Heart right ventricle (tissue), 16 donors: ENCODE measurements at regions of chr12 and their contacts with region 1.

Region 1: GRCh38 chr12:69900720-69901131 is 75.7 kb downstream of the MYRFL start:
- DNase-seq: peak in 1 of 2 donors; percentile 85
- ATAC-seq: peak in 7 of 8 donors; percentile 35 to 79 (median 59)
- H3K4me3 ChIP-seq: no peak overlapping the region
- H3K27ac ChIP-seq: peak overlapping the region in 1 of 10 donors; percentile 9
- H3K4me1 ChIP-seq: peaks cover 0 to 23% (median 13%) of the 10 kb centered on the region in 9 donors
- H3K27me3 ChIP-seq: no peaks in the 10 kb centered on the region
- CTCF ChIP-seq: peak; percentile 79 to 92 (median 86)

Region 2: DNA sequence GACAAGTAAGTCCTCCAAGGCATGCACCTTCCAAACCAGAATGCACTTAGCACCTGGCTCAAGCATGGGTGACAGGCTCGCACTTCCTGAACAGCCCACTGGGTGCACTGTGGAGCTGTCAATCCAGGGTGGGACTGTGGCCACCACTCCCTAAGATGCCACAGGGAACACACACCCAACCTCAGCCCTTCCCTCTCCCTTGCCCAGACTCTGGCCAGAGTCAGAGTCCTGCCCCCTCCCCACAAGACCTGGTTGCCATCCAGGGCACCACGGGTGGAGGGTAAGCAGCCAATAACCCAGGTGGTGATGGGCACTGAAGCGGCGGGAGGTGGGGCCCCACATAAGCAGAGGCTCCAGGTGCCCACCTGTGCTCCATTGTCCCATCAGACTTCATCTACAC is 84.9 kb after region 1 on chr12:
- intact Hi-C with region 1: loop called in 2 of 10 experiments (anchors 5 to 10 kb)
- DNase-seq: no peak
- ATAC-seq: no peak
- H3K4me3 ChIP-seq: no peak overlapping the region
- H3K27ac ChIP-seq: no peak overlapping the region
- H3K4me1 ChIP-seq: peaks cover 0 to 26% (median 18%) of the 10 kb centered on the region in 9 donors
- H3K27me3 ChIP-seq: no peaks in the 10 kb centered on the region
- CTCF ChIP-seq: no peak

Region 3: GRCh38 chr12:69991341-69992288 is 90.9 kb after region 1 on chr12:
- intact Hi-C with region 1: loop called in 2 of 10 experiments (anchors 5 to 10 kb)
- DNase-seq: no peak
- ATAC-seq: no peak
- H3K4me3 ChIP-seq: no peak overlapping the region
- H3K27ac ChIP-seq: no peak overlapping the region
- H3K4me1 ChIP-seq: peaks cover 0 to 26% (median 18%) of the 10 kb centered on the region in 9 donors
- H3K27me3 ChIP-seq: no peaks in the 10 kb centered on the region
- CTCF ChIP-seq: no peak

Region 4: DNA sequence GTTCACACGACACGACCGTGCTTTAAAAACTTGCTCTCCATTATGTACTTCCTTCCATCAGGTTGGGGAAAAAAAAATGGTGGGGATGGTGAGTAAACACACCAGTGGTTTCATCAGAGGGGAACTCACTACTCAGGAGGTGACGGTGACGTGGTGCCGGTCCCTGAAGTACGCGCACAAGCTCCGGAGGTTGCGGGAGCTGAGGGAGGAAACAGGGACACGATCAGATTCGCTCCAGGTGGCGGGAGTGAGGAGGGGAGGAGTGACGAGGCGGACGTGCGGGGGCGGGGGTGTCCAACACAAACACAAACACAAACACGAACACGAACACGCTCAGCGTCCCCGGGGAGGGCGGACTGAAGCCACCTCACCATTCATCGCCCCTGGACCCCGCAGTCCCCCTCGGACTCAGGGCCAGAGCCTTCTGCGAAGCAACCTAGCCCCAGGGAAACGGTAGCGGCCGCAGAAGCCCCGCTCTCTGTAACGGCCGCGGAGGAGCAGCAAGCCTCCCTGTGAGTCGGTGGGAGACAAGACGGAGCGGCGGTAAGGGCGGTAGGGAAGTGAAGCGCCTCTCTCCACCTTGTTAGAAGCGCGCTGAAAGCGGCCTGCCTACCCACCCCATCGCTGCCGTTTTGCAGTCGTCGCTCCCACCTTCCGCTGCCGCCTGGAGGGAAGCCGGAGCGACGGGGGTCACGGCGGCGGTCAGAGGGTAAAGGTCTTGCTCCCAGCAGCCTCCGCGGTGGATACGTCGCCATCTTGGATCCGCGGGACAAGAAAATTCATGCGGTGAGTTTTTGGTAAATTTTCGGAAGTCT is 342.2 kb after region 1 on chr12 and contains the start of gene CNOT2:
- intact Hi-C with region 1: loop called in 3 of 10 experiments (anchors 10 kb)
- DNase-seq: peak; percentile 90 to 92
- ATAC-seq: peak; percentile 96 to 99 (median 97)
- H3K4me3 ChIP-seq: peak within 1 kb of the TSS; percentile 65 to 96 (median 88)
- H3K27ac ChIP-seq: peak within 1 kb of the TSS; percentile 89 to 99 (median 96)
- H3K4me1 ChIP-seq: peaks cover 7 to 61% (median 43%) of the 10 kb centered on the region in 9 donors
- H3K27me3 ChIP-seq: no peaks in the 10 kb centered on the region
- CTCF ChIP-seq: peak in 1 of 9 donors; percentile 14
- total RNA-seq, gene CNOT2: 29.7 to 43.0 (median 36.4) TPM